ENCODE measurements at regions of chr3 and their contacts with region 1.

Region 1: DNA sequence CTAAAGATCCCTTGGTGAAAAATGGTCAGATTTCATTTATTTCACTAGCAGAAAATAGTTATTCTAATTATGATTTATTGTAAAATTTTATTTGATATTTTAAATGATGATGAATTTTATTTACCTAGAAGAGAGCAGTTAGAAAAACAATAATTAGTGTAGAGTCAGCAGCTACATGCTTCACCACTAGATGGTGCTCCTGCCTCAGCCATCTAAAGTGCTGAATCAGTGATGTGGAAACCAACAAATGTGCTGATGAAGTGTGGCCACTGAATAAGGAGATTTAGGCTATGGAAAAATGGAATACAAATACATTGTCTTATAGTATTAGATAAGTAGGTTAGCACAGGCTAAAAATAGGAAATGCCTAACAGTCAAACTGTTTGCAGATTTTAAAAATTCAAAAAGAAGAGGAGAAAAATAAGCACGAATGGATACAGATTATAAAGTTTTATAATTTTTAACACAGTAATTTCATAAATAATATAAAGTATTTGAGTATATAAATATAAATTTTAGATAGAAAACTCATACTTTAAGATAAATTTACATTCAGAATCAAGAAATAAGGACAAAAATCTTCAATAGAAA is 109.8 kb downstream of the PPP2R3A start:
- DNase-seq: peak; percentile 78
- H3K4me3 ChIP-seq: no peak overlapping the region
- H3K27ac ChIP-seq: no peak overlapping the region
- H3K4me1 ChIP-seq: no peaks in the 10 kb centered on the region
- H3K27me3 ChIP-seq: no peaks in the 10 kb centered on the region
- CTCF ChIP-seq: peak; percentile 92

Region 2: DNA sequence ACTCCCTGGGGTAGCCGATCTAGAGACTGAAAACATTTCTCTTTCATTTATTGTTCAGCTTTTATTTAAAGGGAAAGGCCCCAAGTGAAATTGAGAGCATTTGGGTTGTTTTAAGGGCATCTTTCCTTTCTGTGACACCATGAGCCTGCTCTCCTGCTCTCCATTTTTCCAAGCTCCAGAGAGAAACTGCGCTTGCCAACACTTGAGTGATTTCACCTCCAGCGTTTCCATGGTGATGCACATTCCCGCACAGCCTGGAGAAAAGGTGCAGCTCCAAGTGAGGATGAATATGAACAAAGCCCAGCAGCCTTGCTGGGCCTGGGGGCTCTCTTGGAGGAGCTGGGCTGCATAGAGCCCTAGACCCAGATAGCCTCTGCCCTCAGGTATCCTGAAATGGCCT is 269.0 kb before region 1 on chr3:
- intact Hi-C with region 1: no loop called
- DNase-seq: no peak
- H3K4me3 ChIP-seq: no peak overlapping the region
- H3K27ac ChIP-seq: no peak overlapping the region
- H3K4me1 ChIP-seq: peaks cover 8% of the 10 kb centered on the region
- H3K27me3 ChIP-seq: no peaks in the 10 kb centered on the region
- CTCF ChIP-seq: no peak

Region 3: DNA sequence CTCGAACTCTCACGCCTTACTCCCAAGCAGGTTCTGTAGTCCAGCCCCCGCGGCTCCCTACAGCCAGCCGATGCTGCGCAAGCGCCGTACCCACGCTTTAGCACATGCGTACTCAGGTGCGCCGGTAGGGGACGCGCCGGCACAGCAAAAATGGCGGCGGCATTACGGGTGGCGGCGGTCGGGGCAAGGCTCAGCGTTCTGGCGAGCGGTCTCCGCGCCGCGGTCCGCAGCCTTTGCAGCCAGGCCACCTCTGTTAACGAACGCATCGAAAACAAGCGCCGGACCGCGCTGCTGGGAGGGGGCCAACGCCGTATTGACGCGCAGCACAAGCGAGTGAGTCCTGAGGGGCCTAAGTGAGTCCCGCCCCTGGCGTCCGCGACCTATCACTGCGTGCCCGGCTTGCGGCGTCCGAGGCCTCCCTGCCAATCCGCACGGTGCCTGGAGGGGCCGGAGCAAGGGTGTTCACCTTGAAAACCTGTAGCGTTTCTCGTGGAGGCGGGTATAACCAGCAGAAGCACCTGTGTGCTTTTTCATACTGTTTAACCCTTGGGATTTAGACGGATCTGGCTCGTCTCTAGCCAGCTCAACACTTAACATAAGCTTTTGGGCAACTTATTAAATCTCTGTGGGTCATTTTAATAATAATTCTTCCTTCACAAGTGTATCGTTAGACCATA is 175.1 kb after region 1 on chr3 and contains the start of gene PCCB:
- intact Hi-C with region 1: loop called (anchors 5 kb)
- DNase-seq: peak; percentile 97
- H3K4me3 ChIP-seq: peak within 1 kb of the TSS; percentile 55
- H3K27ac ChIP-seq: peak within 1 kb of the TSS; percentile 92
- H3K4me1 ChIP-seq: peaks cover 8% of the 10 kb centered on the region
- H3K27me3 ChIP-seq: no peaks in the 10 kb centered on the region
- CTCF ChIP-seq: peak; percentile 85
- total RNA-seq, gene PCCB: 60.0 to 67.0 TPM

Region 4: GRCh38 chr3:136390574-136390973 is 315.3 kb after region 1 on chr3:
- intact Hi-C with region 1: loop called (anchors 5 kb)
- DNase-seq: no peak
- H3K4me3 ChIP-seq: no peak overlapping the region
- H3K27ac ChIP-seq: no peak overlapping the region
- H3K4me1 ChIP-seq: no peaks in the 10 kb centered on the region
- H3K27me3 ChIP-seq: no peaks in the 10 kb centered on the region
- CTCF ChIP-seq: no peak

Region 5: GRCh38 chr3:136545664-136546268 is 470.5 kb after region 1 on chr3:
- intact Hi-C with region 1: loop called (anchors 10 kb)
- DNase-seq: no peak
- H3K4me3 ChIP-seq: no peak overlapping the region
- H3K27ac ChIP-seq: no peak overlapping the region
- H3K4me1 ChIP-seq: no peaks in the 10 kb centered on the region
- H3K27me3 ChIP-seq: no peaks in the 10 kb centered on the region
- CTCF ChIP-seq: no peak

Region 6: GRCh38 chr3:136752422-136753325 is 677.4 kb after region 1 on chr3:
- intact Hi-C with region 1: loop called (anchors 10 kb)
- DNase-seq: peak; percentile 99
- H3K4me3 ChIP-seq: peak overlapping the region; percentile 60
- H3K27ac ChIP-seq: peak overlapping the region; percentile 98
- H3K4me1 ChIP-seq: no peaks in the 10 kb centered on the region
- H3K27me3 ChIP-seq: no peaks in the 10 kb centered on the region
- CTCF ChIP-seq: no peak

Region 7: GRCh38 chr3:137013955-137014688 is 938.8 kb after region 1 on chr3:
- intact Hi-C with region 1: loop called (anchors 5 kb)
- DNase-seq: peak; percentile 95
- H3K4me3 ChIP-seq: peak overlapping the region; percentile 42
- H3K27ac ChIP-seq: no peak overlapping the region
- H3K4me1 ChIP-seq: peaks cover 5% of the 10 kb centered on the region
- H3K27me3 ChIP-seq: no peaks in the 10 kb centered on the region
- CTCF ChIP-seq: peak; percentile 87

Measured in colonic mucosa (tissue), 4 donors.